PC-9 (cell line): ENCODE measurements at regions of chr3 and their contacts with region 1.

Region 1: DNA sequence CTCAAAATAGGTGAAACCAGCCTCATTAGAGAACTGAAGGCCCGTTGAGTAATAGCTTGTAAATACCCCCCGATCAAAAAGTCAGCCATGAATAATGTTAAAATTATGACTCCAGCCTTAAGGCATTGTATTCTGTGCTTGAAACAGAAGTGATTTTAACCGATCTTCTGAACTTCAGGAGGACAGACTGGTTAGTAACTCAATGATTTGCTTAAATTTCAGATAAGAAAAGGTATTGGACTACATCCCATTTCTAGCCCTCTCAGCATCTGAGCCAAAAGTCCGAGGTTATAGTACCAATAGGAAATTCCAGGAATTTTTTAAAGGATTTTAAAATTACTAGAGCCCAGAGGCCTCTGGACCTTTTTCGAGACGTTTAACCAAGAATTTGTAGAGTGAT is 67.7 kb upstream of the FGF12 start:
- DNase-seq: no peak
- H3K4me3 ChIP-seq: no peak overlapping the region
- H3K27ac ChIP-seq: no peak overlapping the region
- H3K4me1 ChIP-seq: no peaks in the 10 kb centered on the region
- H3K27me3 ChIP-seq: no peaks in the 10 kb centered on the region
- CTCF ChIP-seq: no peak

Region 2: DNA sequence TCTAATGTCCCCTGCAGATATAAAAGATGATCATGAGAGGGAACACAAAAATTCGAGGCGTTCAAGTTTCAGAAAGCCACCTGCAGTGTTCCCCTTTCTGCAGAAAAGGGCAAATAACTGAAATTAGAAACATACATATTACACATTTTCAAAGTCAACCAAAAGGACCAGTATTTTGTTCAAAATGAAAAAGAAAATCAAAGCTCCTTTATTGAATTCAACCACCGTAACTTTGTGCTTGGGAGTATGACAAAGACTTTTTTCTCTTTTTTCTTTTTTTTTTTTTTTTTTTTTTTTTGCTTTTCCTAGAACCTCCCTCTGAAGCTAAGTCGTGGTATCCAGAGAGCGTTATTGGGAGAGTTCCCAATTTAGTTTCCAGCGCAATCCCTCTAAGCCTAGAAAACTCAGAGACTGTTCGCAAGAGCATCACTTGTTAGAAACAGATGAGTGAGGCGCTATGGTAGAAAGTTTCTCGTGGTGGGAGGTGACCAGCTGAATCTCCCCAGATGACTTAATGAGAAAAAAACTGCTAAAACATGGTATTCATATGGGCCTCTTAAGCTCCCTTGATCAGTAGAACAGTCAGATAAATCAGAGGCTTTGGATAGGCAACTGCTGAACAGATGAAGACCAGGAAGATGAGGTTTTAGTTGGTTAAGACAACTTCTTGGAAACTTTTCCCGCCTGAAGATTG is 45.3 kb after region 1 on chr3:
- CTCF ChIA-PET with region 1: interaction called, 16 read pairs
- POLR2A ChIA-PET with region 1: no interaction called
- intact Hi-C with region 1: no loop called
- DNase-seq: no peak
- H3K4me3 ChIP-seq: no peak overlapping the region
- H3K27ac ChIP-seq: no peak overlapping the region
- H3K4me1 ChIP-seq: no peaks in the 10 kb centered on the region
- H3K27me3 ChIP-seq: no peaks in the 10 kb centered on the region
- CTCF ChIP-seq: no peak